ENCODE measurements at regions of chr11 and their contacts with region 1.

Region 1: GRCh38 chr11:95715777-95716241 is 73.8 kb downstream of the FAM76B start:
- DNase-seq: peak; percentile 39
- ATAC-seq: peak; percentile 78
- H3K4me3 Mint-ChIP-seq: peak overlapping the region; percentile 75
- H3K27ac Mint-ChIP-seq: peak overlapping the region; percentile 95
- H3K4me1 Mint-ChIP-seq: peaks cover 92% of the 10 kb centered on the region
- H3K27me3 Mint-ChIP-seq: no peaks in the 10 kb centered on the region
- CTCF ChIP-seq: no peak

Region 2: GRCh38 chr11:95095858-95096587 is 619.8 kb before region 1 on chr11:
- CTCF ChIA-PET with region 1: no interaction called
- POLR2A ChIA-PET with region 1: interaction called, 3 read pairs
- intact Hi-C with region 1: loop called (anchors 5 kb)
- DNase-seq: no peak
- ATAC-seq: peak; percentile 89
- H3K4me3 Mint-ChIP-seq: peak overlapping the region; percentile 59
- H3K27ac Mint-ChIP-seq: peak overlapping the region; percentile 78
- H3K4me1 Mint-ChIP-seq: peaks cover 94% of the 10 kb centered on the region
- H3K27me3 Mint-ChIP-seq: no peaks in the 10 kb centered on the region
- CTCF ChIP-seq: no peak

Region 3: GRCh38 chr11:95254131-95254704 is 461.6 kb before region 1 on chr11:
- CTCF ChIA-PET with region 1: no interaction called
- POLR2A ChIA-PET with region 1: interaction called, 12 read pairs
- intact Hi-C with region 1: no loop called
- DNase-seq: peak; percentile 54
- ATAC-seq: peak; percentile 94
- H3K4me3 Mint-ChIP-seq: peak overlapping the region; percentile 75
- H3K27ac Mint-ChIP-seq: peak overlapping the region; percentile 91
- H3K4me1 Mint-ChIP-seq: peaks cover 81% of the 10 kb centered on the region
- H3K27me3 Mint-ChIP-seq: no peaks in the 10 kb centered on the region
- CTCF ChIP-seq: no peak

Region 4: GRCh38 chr11:95699631-95700470 is 16.0 kb before region 1 on chr11:
- CTCF ChIA-PET with region 1: interaction called, 34 read pairs
- POLR2A ChIA-PET with region 1: interaction called, 39 read pairs
- intact Hi-C with region 1: loop called (anchors 1 kb)
- DNase-seq: no peak
- ATAC-seq: peak; percentile 65
- H3K4me3 Mint-ChIP-seq: peak overlapping the region; percentile 66
- H3K27ac Mint-ChIP-seq: peak overlapping the region; percentile 98
- H3K4me1 Mint-ChIP-seq: peaks cover 52% of the 10 kb centered on the region
- H3K27me3 Mint-ChIP-seq: no peaks in the 10 kb centered on the region
- CTCF ChIP-seq: no peak

Region 5: GRCh38 chr11:95734009-95734572 is 18.3 kb after region 1 on chr11:
- CTCF ChIA-PET with region 1: interaction called, 4 read pairs
- POLR2A ChIA-PET with region 1: interaction called, 7 read pairs
- intact Hi-C with region 1: loop called (anchors 2 kb)
- DNase-seq: no peak
- ATAC-seq: peak; percentile 34
- H3K4me3 Mint-ChIP-seq: no peak overlapping the region
- H3K27ac Mint-ChIP-seq: peak overlapping the region; percentile 20
- H3K4me1 Mint-ChIP-seq: peaks cover 22% of the 10 kb centered on the region
- H3K27me3 Mint-ChIP-seq: no peaks in the 10 kb centered on the region
- CTCF ChIP-seq: no peak

Region 6: GRCh38 chr11:95764267-95764898 is 48.6 kb after region 1 on chr11:
- CTCF ChIA-PET with region 1: interaction called, 8 read pairs
- POLR2A ChIA-PET with region 1: interaction called, 9 read pairs
- intact Hi-C with region 1: loop called (anchors 1 kb)
- DNase-seq: no peak
- ATAC-seq: peak; percentile 69
- H3K4me3 Mint-ChIP-seq: no peak overlapping the region
- H3K27ac Mint-ChIP-seq: no peak overlapping the region
- H3K4me1 Mint-ChIP-seq: peaks cover 23% of the 10 kb centered on the region
- H3K27me3 Mint-ChIP-seq: no peaks in the 10 kb centered on the region
- CTCF ChIP-seq: no peak